A673 (cell line): ENCODE measurements at regions of chr3 and their contacts with region 1.

Region 1: GRCh38 chr3:140898340-140899180 is 43.1 kb upstream of the SLC25A36 start:
- DNase-seq: peak; percentile 76
- H3K4me3 ChIP-seq: no peak overlapping the region
- H3K27ac ChIP-seq: no peak overlapping the region
- H3K4me1 ChIP-seq: no peaks in the 10 kb centered on the region
- H3K27me3 ChIP-seq: peaks cover 19% of the 10 kb centered on the region
- CTCF ChIP-seq: peak; percentile 68

Region 2: DNA sequence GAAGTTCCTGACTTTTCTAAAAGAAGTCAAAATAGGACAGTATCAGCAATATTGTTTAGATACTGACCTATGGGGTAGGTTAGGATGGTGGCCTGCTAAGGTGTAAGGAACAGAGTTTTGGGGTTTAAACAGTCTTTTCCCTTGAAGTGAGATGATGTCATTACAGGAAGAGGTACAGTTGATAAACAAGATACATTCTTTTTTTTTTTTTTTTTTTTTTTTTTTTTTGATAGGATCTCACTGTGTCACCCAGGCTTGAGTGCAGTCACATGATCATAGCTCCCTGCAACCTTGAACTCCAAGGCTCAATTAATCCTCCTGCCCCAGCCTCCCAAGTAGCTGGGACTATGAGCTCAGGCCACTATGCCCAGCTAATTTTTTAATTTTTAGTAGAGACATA is 76.3 kb after region 1 on chr3:
- CTCF ChIA-PET with region 1: no interaction called
- POLR2A ChIA-PET with region 1: no interaction called
- intact Hi-C with region 1: loop called (anchors 5 kb)
- DNase-seq: no peak
- H3K4me3 ChIP-seq: no peak overlapping the region
- H3K27ac ChIP-seq: no peak overlapping the region
- H3K4me1 ChIP-seq: no peaks in the 10 kb centered on the region
- H3K27me3 ChIP-seq: no peaks in the 10 kb centered on the region
- CTCF ChIP-seq: no peak

Region 3: DNA sequence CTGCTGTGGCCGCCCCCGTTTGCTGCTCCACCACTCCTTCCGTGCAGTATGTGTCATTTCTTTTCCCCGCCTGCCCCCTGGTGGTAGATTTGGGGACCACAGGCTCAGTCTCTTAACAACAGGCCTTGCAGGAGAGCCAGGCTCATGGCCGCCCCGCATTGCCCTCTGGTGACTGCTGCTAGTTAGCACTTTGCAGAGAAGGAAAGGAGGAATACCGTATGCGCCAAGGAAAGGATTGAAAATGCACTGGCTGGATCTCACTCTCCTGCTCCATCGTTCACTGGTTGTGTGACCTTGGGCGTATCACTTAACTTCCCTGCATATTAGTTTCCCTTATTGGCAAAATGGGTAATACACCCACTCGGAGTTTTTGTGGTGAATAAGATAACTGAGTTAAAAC is 293.8 kb after region 1 on chr3:
- CTCF ChIA-PET with region 1: interaction called, 4 read pairs
- POLR2A ChIA-PET with region 1: no interaction called
- intact Hi-C with region 1: loop called (anchors 1 kb)
- DNase-seq: peak; percentile 96
- H3K4me3 ChIP-seq: no peak overlapping the region
- H3K27ac ChIP-seq: no peak overlapping the region
- H3K4me1 ChIP-seq: no peaks in the 10 kb centered on the region
- H3K27me3 ChIP-seq: peaks cover 31% of the 10 kb centered on the region
- CTCF ChIP-seq: peak; percentile 98